CD4-positive, alpha-beta T cell (primary cell): ENCODE measurements at regions of chr16 and their contacts with region 1.

Region 1: GRCh38 chr16:19583665-19584300 is 28.3 kb downstream of the VPS35L start:
- DNase-seq: peak in 8 of 14 experiments; percentile 7 to 65 (median 26)
- ATAC-seq: peak; percentile 83
- H3K4me3 ChIP-seq: no peak overlapping the region
- H3K4me3 Mint-ChIP-seq: no peak overlapping the region
- H3K27ac ChIP-seq: no peak overlapping the region
- H3K27ac Mint-ChIP-seq: no peak overlapping the region
- H3K4me1 ChIP-seq: no peaks in the 10 kb centered on the region
- H3K4me1 Mint-ChIP-seq: no peaks in the 10 kb centered on the region
- H3K27me3 ChIP-seq: no peaks in the 10 kb centered on the region
- H3K27me3 Mint-ChIP-seq: no peaks in the 10 kb centered on the region
- CTCF ChIP-seq: peak; percentile 74

Region 2: GRCh38 chr16:19595043-19595767 is 11.4 kb after region 1 on chr16:
- CTCF ChIA-PET with region 1: interaction called, 15 read pairs
- POLR2A ChIA-PET with region 1: no interaction called
- intact Hi-C with region 1: no loop called
- DNase-seq: no peak
- ATAC-seq: no peak
- H3K4me3 ChIP-seq: no peak overlapping the region
- H3K4me3 Mint-ChIP-seq: no peak overlapping the region
- H3K27ac ChIP-seq: no peak overlapping the region
- H3K27ac Mint-ChIP-seq: no peak overlapping the region
- H3K4me1 ChIP-seq: no peaks in the 10 kb centered on the region
- H3K4me1 Mint-ChIP-seq: no peaks in the 10 kb centered on the region
- H3K27me3 ChIP-seq: no peaks in the 10 kb centered on the region
- H3K27me3 Mint-ChIP-seq: no peaks in the 10 kb centered on the region
- CTCF ChIP-seq: no peak

Region 3: DNA sequence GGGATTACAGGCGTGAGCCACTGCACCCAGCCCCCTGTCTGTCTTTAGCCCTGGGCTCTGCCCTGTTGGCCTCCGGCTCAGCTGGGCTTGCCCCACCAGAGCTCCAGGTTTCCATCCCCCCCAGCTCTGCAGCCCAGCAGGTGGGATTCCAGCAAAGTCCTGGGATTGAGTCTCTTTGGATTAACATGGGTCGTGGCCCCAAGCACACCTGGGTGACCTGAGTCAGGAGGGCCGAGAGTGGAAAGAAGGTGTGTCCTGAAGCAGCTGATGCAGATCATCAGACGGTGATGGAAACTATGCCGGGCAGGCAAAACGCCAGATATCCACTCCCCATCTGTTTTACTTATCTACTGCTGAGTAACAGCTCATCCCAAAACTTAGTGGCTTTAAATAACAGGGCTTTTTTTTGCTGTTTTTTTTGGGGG is 61.8 kb after region 1 on chr16:
- CTCF ChIA-PET with region 1: no interaction called
- POLR2A ChIA-PET with region 1: no interaction called
- intact Hi-C with region 1: loop called in 1 of 2 experiments (anchors 10 kb)
- DNase-seq: no peak
- ATAC-seq: no peak
- H3K4me3 ChIP-seq: no peak overlapping the region
- H3K4me3 Mint-ChIP-seq: no peak overlapping the region
- H3K27ac ChIP-seq: no peak overlapping the region
- H3K27ac Mint-ChIP-seq: no peak overlapping the region
- H3K4me1 ChIP-seq: peaks cover 6% of the 10 kb centered on the region
- H3K4me1 Mint-ChIP-seq: peaks cover 2% of the 10 kb centered on the region
- H3K27me3 ChIP-seq: no peaks in the 10 kb centered on the region
- H3K27me3 Mint-ChIP-seq: no peaks in the 10 kb centered on the region
- CTCF ChIP-seq: no peak